Activated CD8-positive, alpha-beta T cell treated with anti-CD3 and anti-CD28 coated beads, Interleukin-2, amount 10 ng/mL, durations not matched to agents 7 days and 5 days (primary cell): ENCODE measurements at regions of chr17 and their contacts with region 1.

Region 1: GRCh38 chr17:58317421-58318064 is 11.1 kb downstream of the TSPOAP1 start:
- DNase-seq: peak; percentile 83
- ATAC-seq: peak; percentile 85
- H3K4me3 Mint-ChIP-seq: peak overlapping the region; percentile 27
- H3K27ac Mint-ChIP-seq: peak overlapping the region; percentile 71
- H3K4me1 Mint-ChIP-seq: peaks cover 19% of the 10 kb centered on the region
- H3K27me3 Mint-ChIP-seq: no peaks in the 10 kb centered on the region

Region 2: GRCh38 chr17:58232707-58233156 is 84.8 kb before region 1 on chr17:
- CTCF ChIA-PET with region 1: no interaction called
- POLR2A ChIA-PET with region 1: no interaction called
- DNase-seq: no peak
- ATAC-seq: no peak
- H3K4me3 Mint-ChIP-seq: no peak overlapping the region
- H3K27ac Mint-ChIP-seq: no peak overlapping the region
- H3K4me1 Mint-ChIP-seq: peaks cover 11% of the 10 kb centered on the region
- H3K27me3 Mint-ChIP-seq: peaks cover 38% of the 10 kb centered on the region

Region 3: DNA sequence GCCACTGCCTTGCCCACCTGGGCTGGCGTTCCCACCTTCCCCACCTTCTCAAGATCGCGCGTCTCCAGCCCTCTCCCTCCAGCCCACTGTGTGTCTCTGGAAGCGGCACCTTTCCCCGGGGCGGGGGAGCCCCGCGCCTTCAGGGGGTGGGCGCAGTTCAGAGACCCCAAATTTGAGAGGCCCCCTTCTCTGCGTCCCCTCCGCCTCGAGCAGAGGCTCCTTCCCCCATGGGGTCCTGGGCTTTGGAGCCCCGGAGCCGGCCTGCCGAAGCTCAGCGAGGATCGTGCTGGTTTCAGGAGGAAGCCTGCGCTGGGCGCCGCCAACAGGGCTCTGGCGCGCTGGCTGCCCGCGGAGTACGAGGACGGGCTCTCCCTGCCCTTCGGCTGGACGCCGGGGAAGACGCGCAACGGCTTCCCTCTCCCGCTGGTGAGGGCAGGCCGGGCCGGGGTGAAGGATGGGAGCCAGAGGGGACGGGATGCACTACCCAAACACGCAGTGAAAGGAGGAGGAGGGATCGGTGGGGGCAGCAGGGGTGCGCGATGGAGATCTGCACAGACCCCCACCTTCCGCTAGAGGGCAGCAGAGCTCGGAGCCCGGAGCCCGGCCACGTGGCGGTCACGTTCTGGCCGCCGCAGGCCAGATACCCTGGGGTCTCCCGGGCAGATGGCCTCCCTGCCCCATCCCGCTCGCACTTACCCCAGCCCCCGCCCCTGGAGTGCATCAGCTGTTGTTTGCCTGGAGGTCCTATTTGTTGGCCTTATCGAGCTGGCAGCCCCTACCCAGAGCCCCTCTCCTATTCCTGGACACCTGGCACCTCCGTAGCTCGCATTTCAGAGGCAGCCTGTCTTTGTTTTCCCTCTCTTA is 68.0 kb before region 1 on chr17:
- CTCF ChIA-PET with region 1: interaction called, 15 read pairs
- POLR2A ChIA-PET with region 1: no interaction called
- DNase-seq: peak; percentile 79
- ATAC-seq: peak; percentile 89
- H3K4me3 Mint-ChIP-seq: peak overlapping the region; percentile 77
- H3K27ac Mint-ChIP-seq: peak overlapping the region; percentile 41
- H3K4me1 Mint-ChIP-seq: peaks cover 32% of the 10 kb centered on the region
- H3K27me3 Mint-ChIP-seq: peaks cover 28% of the 10 kb centered on the region

Region 4: DNA sequence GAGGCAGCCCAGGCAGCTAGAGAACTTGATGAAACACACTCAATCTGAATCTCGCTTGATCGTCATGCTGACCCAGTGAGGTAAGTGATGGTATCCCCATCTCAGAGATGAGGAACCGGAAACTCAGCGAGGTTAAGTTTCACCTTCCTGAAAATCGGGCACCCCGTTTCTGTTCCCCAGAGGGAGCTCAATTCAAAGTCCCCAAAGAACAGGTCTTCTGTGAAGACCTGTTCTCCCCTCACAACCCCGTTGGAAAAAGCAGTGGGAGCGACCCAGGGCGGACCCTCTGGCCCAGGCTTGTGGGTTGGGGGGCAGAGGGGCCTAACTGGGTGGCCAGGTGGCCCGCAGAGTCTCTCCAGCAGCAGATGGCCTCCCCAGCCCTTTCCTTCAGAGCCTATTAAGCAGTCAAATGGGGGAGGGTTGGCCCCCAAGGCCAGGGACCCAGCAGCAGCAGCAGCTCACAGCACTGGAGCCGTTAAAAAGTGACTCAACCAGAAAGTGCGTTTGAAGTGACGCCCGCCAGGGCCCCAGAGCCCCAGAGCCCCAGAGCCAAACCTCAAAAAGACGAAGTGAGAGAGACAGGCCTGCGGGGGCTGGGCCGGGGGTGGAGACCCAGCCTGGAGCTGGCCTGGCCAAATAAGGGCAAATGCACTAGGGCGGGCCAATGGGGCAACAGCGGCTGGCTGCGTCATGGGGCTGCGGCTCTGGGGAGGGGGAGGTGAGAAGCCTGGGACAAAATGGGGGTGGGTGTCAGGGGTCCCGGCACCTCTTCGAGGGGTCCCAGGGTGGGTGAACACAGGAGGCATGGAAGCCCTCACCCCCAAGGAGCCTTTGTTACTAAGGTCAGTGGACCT is 20.3 kb after region 1 on chr17:
- CTCF ChIA-PET with region 1: interaction called, 235 read pairs
- POLR2A ChIA-PET with region 1: interaction called, 2,649 read pairs
- DNase-seq: peak; percentile 96
- ATAC-seq: peak; percentile 67
- H3K4me3 Mint-ChIP-seq: peak overlapping the region; percentile 99
- H3K27ac Mint-ChIP-seq: peak overlapping the region; percentile 92
- H3K4me1 Mint-ChIP-seq: peaks cover 39% of the 10 kb centered on the region
- H3K27me3 Mint-ChIP-seq: no peaks in the 10 kb centered on the region

Region 5: DNA sequence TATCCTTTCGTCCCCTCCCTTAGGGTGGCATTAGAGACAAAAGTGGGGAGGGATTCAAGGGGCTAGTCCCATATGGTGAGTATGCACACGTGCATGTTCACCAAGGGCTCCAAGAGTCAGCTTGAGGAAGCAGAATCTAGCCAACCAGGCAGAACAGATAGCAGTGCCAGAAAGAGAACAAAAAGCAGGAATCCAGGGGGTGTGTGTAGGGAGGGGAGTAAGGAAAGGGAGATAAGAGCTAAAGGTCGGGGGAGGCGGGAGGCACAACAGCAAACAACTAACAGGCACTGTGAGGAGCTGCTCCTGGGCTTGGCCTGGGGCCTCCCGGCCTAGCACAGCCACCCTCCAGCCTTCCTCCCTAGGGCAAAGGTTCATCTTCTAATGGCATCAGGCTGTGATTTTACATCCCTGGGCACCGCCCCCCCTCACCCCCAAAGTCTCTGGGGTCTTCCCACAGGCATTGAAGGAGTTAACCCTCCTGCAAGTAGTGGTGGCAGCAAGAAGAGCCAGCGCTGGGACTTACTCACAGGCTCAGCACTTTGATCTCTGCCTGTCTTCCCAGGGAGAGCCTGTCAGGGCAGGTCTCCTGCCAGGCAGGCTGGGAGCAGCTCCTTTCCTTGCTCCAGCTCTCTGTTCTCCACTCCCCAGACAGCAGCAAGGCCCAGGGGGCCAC is 46.9 kb after region 1 on chr17:
- CTCF ChIA-PET with region 1: interaction called, 11 read pairs
- POLR2A ChIA-PET with region 1: interaction called, 7 read pairs
- DNase-seq: no peak
- ATAC-seq: no peak
- H3K4me3 Mint-ChIP-seq: no peak overlapping the region
- H3K27ac Mint-ChIP-seq: no peak overlapping the region
- H3K4me1 Mint-ChIP-seq: no peaks in the 10 kb centered on the region
- H3K27me3 Mint-ChIP-seq: no peaks in the 10 kb centered on the region

Region 6: DNA sequence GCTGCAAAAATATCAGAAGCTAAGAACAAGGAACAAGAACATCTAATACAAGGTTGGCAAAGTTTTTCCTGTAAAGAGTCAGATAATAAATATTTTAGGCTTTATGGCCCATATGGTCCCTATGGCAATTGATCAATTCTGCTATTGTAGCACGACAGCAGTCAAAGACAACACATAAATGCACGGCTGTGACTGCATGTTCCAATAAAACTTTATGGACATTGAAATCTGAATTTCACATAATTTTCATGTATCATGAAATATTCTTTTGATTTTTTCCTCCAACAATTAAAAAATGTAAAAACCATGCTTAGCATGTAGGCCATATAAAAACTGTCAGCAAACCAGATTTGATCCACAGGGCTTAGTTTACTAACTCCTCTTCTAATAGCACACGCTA is 110.3 kb after region 1 on chr17:
- CTCF ChIA-PET with region 1: interaction called, 57 read pairs
- POLR2A ChIA-PET with region 1: no interaction called
- DNase-seq: no peak
- ATAC-seq: no peak
- H3K4me3 Mint-ChIP-seq: no peak overlapping the region
- H3K27ac Mint-ChIP-seq: no peak overlapping the region
- H3K4me1 Mint-ChIP-seq: no peaks in the 10 kb centered on the region
- H3K27me3 Mint-ChIP-seq: peaks cover 2% of the 10 kb centered on the region

Region 7: DNA sequence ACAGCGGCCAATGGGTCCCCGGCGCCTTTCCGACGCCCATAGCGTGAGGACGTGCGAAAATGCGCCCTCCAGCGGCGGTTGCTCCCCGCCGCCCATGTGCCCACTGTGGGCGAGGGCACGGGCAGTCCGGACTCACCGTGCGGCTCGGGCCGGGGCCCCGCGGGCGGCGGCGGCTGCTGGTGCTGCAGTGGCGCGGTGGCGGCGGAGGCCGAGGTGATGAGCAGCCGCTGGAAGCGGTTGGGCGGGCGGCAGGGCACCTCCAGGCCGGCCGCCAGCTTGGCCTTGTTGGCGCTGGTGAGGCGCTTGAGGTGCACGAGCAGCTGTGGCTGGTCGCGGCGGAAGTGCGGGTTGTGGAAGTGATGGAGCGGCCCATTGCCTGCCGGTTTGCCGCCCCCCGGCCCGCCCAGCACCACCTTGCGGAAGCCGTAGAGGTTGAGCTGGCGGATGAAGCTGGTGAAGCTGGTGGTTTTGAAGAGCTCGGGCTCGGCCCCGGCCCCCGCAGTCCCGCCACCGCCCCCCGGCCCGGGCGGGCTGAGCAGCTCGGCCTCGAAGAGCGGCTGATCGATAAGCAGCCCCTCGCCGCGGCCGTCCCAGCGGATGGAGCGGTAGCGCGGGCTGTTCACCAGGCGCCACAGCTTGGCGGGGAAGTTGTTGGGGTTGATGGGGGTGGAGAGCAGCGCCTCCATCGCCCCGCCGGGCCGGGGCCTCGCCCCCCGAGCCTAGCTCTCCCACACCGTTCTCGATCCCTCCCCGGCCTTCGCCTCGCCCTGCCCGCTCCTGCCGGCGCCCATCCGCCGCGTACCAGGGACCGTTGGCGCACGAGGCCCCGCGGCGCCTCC is 170.3 kb after region 1 on chr17 and contains the start of gene HSF5:
- CTCF ChIA-PET with region 1: interaction called, 18 read pairs
- POLR2A ChIA-PET with region 1: no interaction called
- DNase-seq: peak; percentile 78
- ATAC-seq: peak; percentile 88
- H3K4me3 Mint-ChIP-seq: peak within 1 kb of the TSS; percentile 22
- H3K27ac Mint-ChIP-seq: no peak within 1 kb of the TSS
- H3K4me1 Mint-ChIP-seq: peaks cover 10% of the 10 kb centered on the region
- H3K27me3 Mint-ChIP-seq: peaks cover 4% of the 10 kb centered on the region
- total RNA-seq, gene HSF5: 0.08 to 0.18 TPM